Panc1 (cell line): ENCODE measurements at regions of chr20 and their contacts with region 1.

Region 1: GRCh38 chr20:17536944-17537444 is 5.8 kb upstream of the BFSP1 start:
- DNase-seq: peak; percentile 82
- ATAC-seq: peak; percentile 99
- H3K4me3 ChIP-seq: peak overlapping the region in 1 of 2 experiments; percentile 15; a peak in 1 of 4 replicates
- H3K27ac ChIP-seq: peak overlapping the region; percentile 76
- H3K4me1 ChIP-seq: peaks cover 33% of the 10 kb centered on the region
- H3K27me3 ChIP-seq: no peaks in the 10 kb centered on the region
- CTCF ChIP-seq: peak; percentile 89

Region 2: DNA sequence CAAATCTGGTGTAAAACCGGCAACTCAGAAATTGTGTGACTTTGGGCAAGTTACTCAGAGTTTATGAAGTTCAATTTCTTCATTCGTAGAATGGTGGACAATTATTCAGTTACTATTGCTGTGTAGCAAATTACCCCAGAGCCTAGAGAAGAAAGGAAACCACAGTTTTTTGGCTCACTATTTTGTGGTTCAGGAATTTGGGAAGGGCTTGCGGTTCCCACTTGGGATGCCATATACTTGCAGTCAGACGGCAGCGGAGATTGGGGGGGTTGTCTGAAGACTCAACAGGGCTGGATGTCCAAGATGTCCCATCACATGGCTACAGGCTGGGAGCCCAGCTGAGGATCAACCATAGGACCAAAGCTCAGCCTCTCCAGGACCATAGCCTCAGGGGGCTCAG is 202.1 kb before region 1 on chr20:
- CTCF ChIA-PET with region 1: no interaction called
- POLR2A ChIA-PET with region 1: no interaction called
- in situ Hi-C with region 1: no loop called
- intact Hi-C with region 1: no loop called
- DNase-seq: no peak
- ATAC-seq: no peak
- H3K4me3 ChIP-seq: no peak overlapping the region
- H3K27ac ChIP-seq: no peak overlapping the region
- H3K4me1 ChIP-seq: no peaks in the 10 kb centered on the region
- H3K27me3 ChIP-seq: peaks cover 4% of the 10 kb centered on the region; the same call in 1 of the 2 replicates
- CTCF ChIP-seq: no peak

Region 3: DNA sequence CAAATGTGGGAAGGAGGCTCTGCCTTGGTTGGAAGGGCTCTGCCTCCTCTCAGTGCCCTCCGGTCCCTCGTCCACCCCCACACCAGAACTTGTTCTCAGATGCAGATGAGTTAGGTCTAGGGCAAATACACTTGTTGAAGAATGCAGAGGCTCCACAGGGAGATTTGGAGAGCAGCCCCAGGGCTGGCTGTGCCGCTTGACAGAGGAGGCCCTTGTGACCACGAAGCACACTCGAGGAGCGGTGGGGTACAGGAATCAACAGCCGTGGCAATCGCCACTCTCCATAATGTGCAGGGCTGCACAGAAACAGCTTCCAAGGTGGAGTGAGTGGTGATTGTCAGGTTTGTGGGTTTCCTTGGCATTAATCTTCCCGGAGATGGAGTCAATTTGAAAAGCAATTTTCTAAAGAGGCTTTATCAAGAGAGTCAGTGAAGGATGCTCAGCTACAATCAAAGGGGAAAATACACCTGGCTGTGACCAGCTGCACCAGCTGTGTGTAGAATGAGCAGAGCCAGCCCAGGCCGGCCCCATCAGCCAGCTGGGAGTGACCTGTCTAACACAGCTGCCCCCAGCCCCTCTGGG is 65.3 kb before region 1 on chr20:
- CTCF ChIA-PET with region 1: no interaction called
- POLR2A ChIA-PET with region 1: no interaction called
- in situ Hi-C with region 1: no loop called
- intact Hi-C with region 1: no loop called
- DNase-seq: no peak
- ATAC-seq: no peak; the same call in 1 of the 2 replicates
- H3K4me3 ChIP-seq: no peak overlapping the region
- H3K27ac ChIP-seq: no peak overlapping the region
- H3K4me1 ChIP-seq: no peaks in the 10 kb centered on the region
- H3K27me3 ChIP-seq: no peaks in the 10 kb centered on the region
- CTCF ChIP-seq: no peak

Region 4: DNA sequence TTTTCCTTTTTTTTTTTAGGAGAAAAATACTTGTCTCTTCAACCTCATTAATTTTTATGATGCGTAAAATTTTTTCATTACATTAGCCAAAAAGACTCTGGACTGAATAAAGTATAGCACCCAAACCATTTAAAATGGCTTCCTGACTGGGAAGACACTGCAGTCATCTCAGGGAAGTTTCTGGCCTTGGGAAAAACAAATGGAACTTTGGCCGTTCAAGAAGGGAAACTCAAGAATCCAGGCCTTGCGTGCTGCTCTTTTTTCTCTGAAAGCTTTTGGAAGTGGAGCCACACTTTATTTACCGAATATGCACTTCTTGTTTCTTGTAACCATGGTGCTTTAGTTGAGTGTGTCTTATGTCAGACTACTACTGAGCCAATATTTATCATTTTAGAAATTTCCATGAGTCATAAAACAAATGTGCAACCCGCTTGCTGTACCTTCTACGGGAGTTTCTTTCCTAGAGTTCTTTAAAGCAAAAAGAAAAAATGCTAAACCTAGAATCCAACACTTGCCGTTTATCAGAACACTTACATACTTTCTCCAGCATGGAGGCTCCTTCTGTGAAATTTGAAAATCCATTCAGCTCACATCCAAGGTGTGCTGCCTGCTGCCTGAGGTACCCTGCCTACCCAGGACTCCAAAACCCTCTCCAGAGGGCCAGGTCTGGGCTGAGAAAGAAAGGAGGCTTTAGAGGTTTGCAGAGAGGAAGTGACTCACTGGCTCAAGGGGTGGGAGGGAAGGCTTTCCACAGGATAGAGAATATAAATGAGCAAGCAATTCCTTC is 21.4 kb after region 1 on chr20:
- CTCF ChIA-PET with region 1: interaction called, 15 read pairs
- POLR2A ChIA-PET with region 1: no interaction called
- in situ Hi-C with region 1: no loop called
- intact Hi-C with region 1: no loop called
- DNase-seq: peak; percentile 96
- ATAC-seq: peak; percentile 92
- H3K4me3 ChIP-seq: peak overlapping the region; percentile 33 to 45
- H3K27ac ChIP-seq: peak overlapping the region; percentile 100
- H3K4me1 ChIP-seq: peaks cover 60% of the 10 kb centered on the region
- H3K27me3 ChIP-seq: no peaks in the 10 kb centered on the region
- CTCF ChIP-seq: no peak

Region 5: GRCh38 chr20:17594443-17594842 is 57.4 kb after region 1 on chr20:
- CTCF ChIA-PET with region 1: no interaction called
- POLR2A ChIA-PET with region 1: no interaction called
- in situ Hi-C with region 1: no loop called
- intact Hi-C with region 1: loop called (anchors 5 kb)
- DNase-seq: no peak
- ATAC-seq: no peak
- H3K4me3 ChIP-seq: no peak overlapping the region
- H3K27ac ChIP-seq: no peak overlapping the region
- H3K4me1 ChIP-seq: peaks cover 35% of the 10 kb centered on the region; the same call in 1 of the 2 replicates
- H3K27me3 ChIP-seq: no peaks in the 10 kb centered on the region
- CTCF ChIP-seq: no peak

Region 6: DNA sequence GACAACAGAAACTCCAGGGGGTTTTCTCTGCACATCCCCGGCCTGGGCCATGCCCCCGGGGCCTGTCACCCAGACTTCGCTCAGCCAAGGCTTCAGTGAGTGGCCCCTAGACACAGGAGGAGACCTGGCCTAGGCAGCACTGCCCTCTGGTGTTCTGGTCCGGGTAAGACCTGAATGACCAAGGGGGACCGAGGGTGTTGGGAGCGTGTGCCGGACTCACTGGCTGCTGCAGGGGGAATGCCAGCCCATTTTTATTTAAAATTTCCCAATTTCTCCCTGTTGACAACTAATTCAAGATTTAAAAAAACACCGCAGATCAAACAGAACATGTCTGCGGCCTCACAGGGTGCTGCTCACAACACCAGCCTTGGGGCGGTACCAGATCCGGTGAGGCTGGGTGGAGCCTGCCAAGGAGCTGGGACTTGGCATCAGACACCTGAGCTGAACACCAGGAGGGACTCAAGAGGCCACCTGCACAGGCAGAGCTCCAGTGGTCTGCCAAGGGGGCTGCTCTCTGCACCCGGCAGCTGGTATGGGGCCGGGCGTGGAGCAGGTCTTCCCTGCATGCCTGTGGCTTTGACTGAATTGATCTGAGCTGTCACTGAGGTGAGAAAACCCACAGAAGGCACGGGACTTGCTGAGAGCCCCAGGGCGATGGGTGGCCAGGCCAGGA is 80.7 kb after region 1 on chr20:
- CTCF ChIA-PET with region 1: interaction called, 7 read pairs
- POLR2A ChIA-PET with region 1: no interaction called
- in situ Hi-C with region 1: no loop called
- intact Hi-C with region 1: loop called (anchors 2 kb)
- DNase-seq: peak; percentile 13
- ATAC-seq: peak; percentile 68
- H3K4me3 ChIP-seq: no peak overlapping the region
- H3K27ac ChIP-seq: no peak overlapping the region
- H3K4me1 ChIP-seq: peaks cover 29% of the 10 kb centered on the region
- H3K27me3 ChIP-seq: no peaks in the 10 kb centered on the region
- CTCF ChIP-seq: peak; percentile 93